PC-3 (cell line): ENCODE measurements at regions of chr10 and their contacts with region 1.

Region 1: GRCh38 chr10:70925377-70926225 is 37.2 kb upstream of the PCBD1 start:
- DNase-seq: peak; percentile 75
- ATAC-seq: peak; percentile 77
- H3K4me3 ChIP-seq: no peak overlapping the region
- H3K27ac ChIP-seq: no peak overlapping the region
- H3K4me1 ChIP-seq: peaks cover 13% of the 10 kb centered on the region
- H3K27me3 ChIP-seq: no peaks in the 10 kb centered on the region
- CTCF ChIP-seq: peak; percentile 100

Region 2: GRCh38 chr10:70753841-70754621 is 171.6 kb before region 1 on chr10:
- CTCF ChIA-PET with region 1: no interaction called
- POLR2A ChIA-PET with region 1: no interaction called
- intact Hi-C with region 1: no loop called
- DNase-seq: no peak
- ATAC-seq: no peak
- H3K4me3 ChIP-seq: no peak overlapping the region
- H3K27ac ChIP-seq: no peak overlapping the region
- H3K4me1 ChIP-seq: peaks cover 8% of the 10 kb centered on the region
- H3K27me3 ChIP-seq: no peaks in the 10 kb centered on the region
- CTCF ChIP-seq: no peak

Region 3: GRCh38 chr10:71209352-71209715 is 283.7 kb after region 1 on chr10:
- CTCF ChIA-PET with region 1: no interaction called
- POLR2A ChIA-PET with region 1: no interaction called
- intact Hi-C with region 1: loop called (anchors 2 kb)
- DNase-seq: no peak
- ATAC-seq: no peak
- H3K4me3 ChIP-seq: no peak overlapping the region
- H3K27ac ChIP-seq: no peak overlapping the region
- H3K4me1 ChIP-seq: peaks cover 9% of the 10 kb centered on the region; the same call in 1 of the 2 replicates
- H3K27me3 ChIP-seq: peaks cover 42% of the 10 kb centered on the region
- CTCF ChIP-seq: no peak; the same call in 1 of the 2 replicates